Activated CD8-positive, alpha-beta T cell treated with anti-CD3 and anti-CD28 coated beads for 36 hours (primary cell): ENCODE measurements at regions of chr4 and their contacts with region 1.

Region 1: DNA sequence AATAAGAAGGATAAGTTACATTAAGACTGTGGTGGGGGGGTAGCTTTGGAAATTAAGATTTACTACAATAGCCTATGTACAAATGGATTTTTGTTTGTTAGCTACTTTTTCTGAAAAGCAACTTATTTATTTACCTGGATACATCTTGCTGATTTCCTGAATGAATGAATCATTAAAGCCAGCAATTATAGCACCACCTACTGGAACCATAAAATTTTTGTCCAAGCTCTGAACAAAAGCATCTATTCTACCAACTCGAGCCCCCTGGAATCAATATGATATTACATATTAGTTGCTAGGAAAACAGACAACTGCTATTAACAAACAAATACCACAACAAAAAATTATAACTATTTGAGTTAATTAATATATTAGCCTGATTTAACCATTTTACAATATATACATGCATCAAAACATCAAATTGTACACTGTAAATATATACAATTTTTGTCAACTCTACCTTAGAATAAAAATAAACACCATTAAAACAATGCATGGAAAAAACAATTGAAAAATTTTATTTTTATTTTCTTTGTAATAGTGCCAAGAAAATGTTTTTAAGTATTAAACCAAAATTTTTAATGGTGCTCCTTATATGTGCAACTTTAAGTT is 15.3 kb downstream of the SEPSECS start:
- DNase-seq: no peak
- ATAC-seq: no peak
- H3K4me3 Mint-ChIP-seq: no peak overlapping the region
- H3K27ac Mint-ChIP-seq: no peak overlapping the region
- H3K4me1 Mint-ChIP-seq: no peaks in the 10 kb centered on the region
- H3K27me3 Mint-ChIP-seq: no peaks in the 10 kb centered on the region
- CTCF ChIP-seq: peak; percentile 62

Region 2: DNA sequence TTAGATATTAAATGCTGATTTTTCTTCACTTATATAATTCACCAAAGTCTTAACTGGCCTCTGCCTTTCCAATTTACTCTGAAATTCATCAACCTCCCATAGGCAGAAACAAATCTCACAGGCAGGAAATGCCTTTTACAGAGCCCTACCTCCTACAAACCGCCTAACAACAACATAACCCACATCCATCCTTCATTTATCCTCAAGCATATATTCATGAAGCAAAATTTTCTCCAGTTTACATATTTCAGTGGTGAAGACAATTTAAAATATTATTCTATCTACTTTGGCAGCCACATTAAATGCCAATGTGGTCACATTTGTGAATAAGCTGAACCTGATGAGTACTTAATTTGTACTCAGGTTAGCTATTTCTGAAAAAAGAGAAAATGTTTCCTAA is 15.1 kb before region 1 on chr4:
- CTCF ChIA-PET with region 1: interaction called, 18 read pairs
- POLR2A ChIA-PET with region 1: interaction called, 3 read pairs
- intact Hi-C with region 1: no loop called
- DNase-seq: no peak
- ATAC-seq: no peak
- H3K4me3 Mint-ChIP-seq: no peak overlapping the region
- H3K27ac Mint-ChIP-seq: no peak overlapping the region
- H3K4me1 Mint-ChIP-seq: peaks cover 3% of the 10 kb centered on the region
- H3K27me3 Mint-ChIP-seq: no peaks in the 10 kb centered on the region
- CTCF ChIP-seq: no peak